Calu3 (cell line): ENCODE measurements at regions of chr11 and their contacts with region 1.

Region 1: DNA sequence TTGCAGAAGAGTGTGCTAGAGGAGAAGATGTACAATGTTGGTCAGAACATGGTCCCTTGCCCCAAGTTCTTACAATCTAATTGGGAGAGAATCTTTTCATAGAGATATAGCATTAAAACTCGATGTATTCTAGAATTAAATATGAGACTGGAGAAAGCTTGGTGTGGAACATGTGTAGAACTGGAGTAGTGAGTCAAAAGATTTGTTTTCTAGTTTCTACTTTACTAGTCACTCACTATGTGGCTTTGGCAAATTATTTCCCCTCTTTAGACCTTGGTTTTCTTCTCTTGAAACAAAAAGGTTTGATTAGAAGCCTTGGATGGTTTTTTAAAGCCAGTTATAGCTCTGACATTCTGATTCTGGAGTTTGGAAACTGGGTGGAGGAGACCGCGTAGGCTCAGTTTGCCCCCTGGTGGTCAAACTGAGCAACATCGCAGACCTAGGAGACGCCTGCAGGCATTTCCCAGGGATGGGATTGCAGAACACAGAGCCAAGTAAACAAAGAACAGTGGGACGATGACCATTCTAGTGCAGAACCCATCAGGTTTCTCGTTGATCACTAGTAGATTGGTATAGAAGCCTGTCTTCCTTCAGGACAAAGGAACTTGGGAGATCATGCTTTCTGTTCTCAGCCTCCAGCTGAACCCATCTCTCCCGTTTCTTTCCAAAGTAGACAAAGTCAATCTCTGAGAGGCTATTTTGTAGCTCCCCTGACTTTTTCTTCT is 8.5 kb upstream of the CHRDL2 start:
- DNase-seq: peak; percentile 64
- H3K4me3 Mint-ChIP-seq: no peak overlapping the region
- H3K27ac Mint-ChIP-seq: no peak overlapping the region
- H3K4me1 Mint-ChIP-seq: no peaks in the 10 kb centered on the region
- H3K27me3 Mint-ChIP-seq: peaks cover 47% of the 10 kb centered on the region
- CTCF ChIP-seq: peak; percentile 83

Region 2: GRCh38 chr11:74702383-74703007 is 37.2 kb before region 1 on chr11:
- CTCF ChIA-PET with region 1: interaction called, 27 read pairs
- intact Hi-C with region 1: no loop called
- DNase-seq: peak; percentile 74
- H3K4me3 Mint-ChIP-seq: no peak overlapping the region
- H3K27ac Mint-ChIP-seq: no peak overlapping the region
- H3K4me1 Mint-ChIP-seq: peaks cover 9% of the 10 kb centered on the region
- H3K27me3 Mint-ChIP-seq: peaks cover 39% of the 10 kb centered on the region
- CTCF ChIP-seq: peak; percentile 87